B cell (primary cell): ENCODE measurements at regions of chr7 and their contacts with region 1.

Region 1: DNA sequence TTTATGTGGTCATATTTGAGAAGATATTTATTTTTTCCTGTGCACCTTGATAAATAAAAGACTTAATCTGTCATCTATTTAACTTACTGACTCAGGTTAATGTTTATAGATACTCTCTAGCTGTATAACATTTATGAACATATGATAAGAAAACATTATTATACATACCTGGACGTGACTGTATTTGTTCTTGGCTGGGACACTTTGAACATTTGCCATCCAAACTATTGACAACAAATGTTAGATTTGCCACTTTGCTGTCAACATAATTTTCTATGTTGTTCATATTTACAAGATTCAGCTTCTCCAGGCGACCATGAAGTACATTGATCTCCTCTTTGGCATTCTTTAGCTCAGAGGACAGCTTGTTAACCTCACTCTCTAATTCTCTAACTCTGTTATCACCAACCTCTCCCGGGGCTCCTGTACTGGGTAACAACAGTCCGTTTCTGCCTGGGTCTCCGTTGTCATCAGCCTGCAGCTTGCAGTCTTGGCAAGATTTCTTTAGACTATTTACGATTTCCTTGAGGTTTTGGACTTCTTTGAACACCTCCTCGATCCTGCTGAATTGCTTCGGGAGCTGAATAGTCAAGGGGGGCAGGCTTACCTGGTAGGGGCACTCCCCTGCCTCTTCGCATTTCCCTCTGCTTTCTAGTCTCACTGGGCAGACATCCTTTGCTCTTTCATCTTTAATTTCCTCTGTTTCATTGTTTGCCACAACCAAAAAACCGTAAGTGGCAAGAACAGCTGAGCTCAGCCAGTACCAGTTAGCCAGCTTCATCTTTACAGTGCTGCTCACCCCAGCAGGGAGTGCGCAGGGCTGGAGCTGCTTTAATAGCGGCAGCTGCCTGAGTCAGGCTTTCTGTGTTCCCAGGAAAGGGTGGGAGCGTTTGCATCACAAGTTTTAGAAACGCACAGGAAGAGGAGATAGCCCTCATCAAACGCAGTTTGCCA is at the start of gene FGL2:
- DNase-seq: peak; percentile 37
- ATAC-seq: peak; percentile 53
- H3K4me3 ChIP-seq: peak within 1 kb of the TSS; percentile 45 to 85 (median 59)
- H3K4me3 Mint-ChIP-seq: peak within 1 kb of the TSS; percentile 87
- H3K27ac ChIP-seq: peak within 1 kb of the TSS; percentile 66 to 83
- H3K27ac Mint-ChIP-seq: peak within 1 kb of the TSS; percentile 91
- H3K4me1 ChIP-seq: peaks cover 32 to 37% of the 10 kb centered on the region in 2 donors
- H3K4me1 Mint-ChIP-seq: peaks cover 67% of the 10 kb centered on the region
- H3K27me3 ChIP-seq: no peaks in the 10 kb centered on the region
- H3K27me3 Mint-ChIP-seq: no peaks in the 10 kb centered on the region
- CTCF ChIP-seq: no peak
- total RNA-seq, gene FGL2: 6.5 and 7.0 TPM in 2 replicates

Region 2: DNA sequence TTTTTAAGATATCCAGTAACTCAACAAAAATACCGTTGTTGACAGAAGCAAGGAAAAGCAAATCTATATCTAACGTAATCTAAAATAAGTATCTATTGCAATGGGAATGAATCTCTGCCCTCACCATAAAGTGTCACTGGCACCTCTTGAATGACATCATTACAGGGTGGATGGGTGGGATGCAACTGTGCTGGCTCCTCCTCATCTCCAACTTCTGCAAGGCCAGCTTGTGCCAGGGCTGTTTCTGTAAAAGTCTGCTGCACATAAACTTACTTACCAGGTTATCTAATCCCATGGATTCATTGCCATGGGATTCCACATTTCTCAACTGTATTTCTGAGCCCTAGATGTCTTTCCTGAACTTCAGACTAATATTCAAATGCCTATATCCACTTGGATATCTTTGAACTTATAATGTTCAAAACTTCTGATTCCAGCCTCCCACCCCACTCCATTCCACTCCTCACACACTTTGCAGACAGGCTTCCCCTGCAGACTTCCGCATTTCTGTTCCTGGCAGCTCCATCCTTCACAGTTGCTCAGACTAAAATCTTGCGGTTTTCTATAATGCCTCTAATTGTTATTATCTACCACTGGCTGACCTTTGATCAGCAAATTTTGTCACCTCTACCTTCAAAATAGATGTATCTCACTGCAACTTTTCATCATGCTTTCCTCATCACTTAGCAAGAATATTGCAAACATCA is 10.4 kb before region 1 on chr7:
- CTCF ChIA-PET with region 1: interaction called, 3 read pairs
- POLR2A ChIA-PET with region 1: interaction called, 5 read pairs
- intact Hi-C with region 1: loop called (anchors 1 kb)
- DNase-seq: no peak
- ATAC-seq: no peak
- H3K4me3 ChIP-seq: no peak overlapping the region
- H3K4me3 Mint-ChIP-seq: no peak overlapping the region
- H3K27ac ChIP-seq: no peak overlapping the region
- H3K27ac Mint-ChIP-seq: no peak overlapping the region
- H3K4me1 ChIP-seq: peaks cover 24 to 25% of the 10 kb centered on the region in 2 donors
- H3K4me1 Mint-ChIP-seq: peaks cover 27% of the 10 kb centered on the region
- H3K27me3 ChIP-seq: no peaks in the 10 kb centered on the region
- H3K27me3 Mint-ChIP-seq: no peaks in the 10 kb centered on the region
- CTCF ChIP-seq: no peak

Region 3: GRCh38 chr7:77217474-77218185 is 18.3 kb after region 1 on chr7:
- CTCF ChIA-PET with region 1: no interaction called
- POLR2A ChIA-PET with region 1: no interaction called
- intact Hi-C with region 1: loop called (anchors 2 kb)
- DNase-seq: no peak
- ATAC-seq: no peak
- H3K4me3 ChIP-seq: no peak overlapping the region
- H3K4me3 Mint-ChIP-seq: no peak overlapping the region
- H3K27ac ChIP-seq: no peak overlapping the region
- H3K27ac Mint-ChIP-seq: no peak overlapping the region
- H3K4me1 ChIP-seq: no peaks in the 10 kb centered on the region
- H3K4me1 Mint-ChIP-seq: peaks cover 2% of the 10 kb centered on the region
- H3K27me3 ChIP-seq: no peaks in the 10 kb centered on the region
- H3K27me3 Mint-ChIP-seq: no peaks in the 10 kb centered on the region
- CTCF ChIP-seq: no peak

Region 4: GRCh38 chr7:77536413-77537135 is 337.3 kb after region 1 on chr7:
- CTCF ChIA-PET with region 1: no interaction called
- POLR2A ChIA-PET with region 1: no interaction called
- intact Hi-C with region 1: loop called (anchors 10 kb)
- DNase-seq: peak; percentile 96
- ATAC-seq: peak; percentile 89
- H3K4me3 ChIP-seq: peak overlapping the region; percentile 88 to 96 (median 95)
- H3K4me3 Mint-ChIP-seq: peak overlapping the region; percentile 99
- H3K27ac ChIP-seq: peak overlapping the region; percentile 75 to 81
- H3K27ac Mint-ChIP-seq: peak overlapping the region; percentile 98
- H3K4me1 ChIP-seq: peaks cover 8 to 28% of the 10 kb centered on the region in 2 donors
- H3K4me1 Mint-ChIP-seq: peaks cover 27% of the 10 kb centered on the region
- H3K27me3 ChIP-seq: no peaks in the 10 kb centered on the region
- H3K27me3 Mint-ChIP-seq: no peaks in the 10 kb centered on the region
- CTCF ChIP-seq: no peak